ENCODE measurements at regions of chr5 and their contacts with region 1.

Region 1: DNA sequence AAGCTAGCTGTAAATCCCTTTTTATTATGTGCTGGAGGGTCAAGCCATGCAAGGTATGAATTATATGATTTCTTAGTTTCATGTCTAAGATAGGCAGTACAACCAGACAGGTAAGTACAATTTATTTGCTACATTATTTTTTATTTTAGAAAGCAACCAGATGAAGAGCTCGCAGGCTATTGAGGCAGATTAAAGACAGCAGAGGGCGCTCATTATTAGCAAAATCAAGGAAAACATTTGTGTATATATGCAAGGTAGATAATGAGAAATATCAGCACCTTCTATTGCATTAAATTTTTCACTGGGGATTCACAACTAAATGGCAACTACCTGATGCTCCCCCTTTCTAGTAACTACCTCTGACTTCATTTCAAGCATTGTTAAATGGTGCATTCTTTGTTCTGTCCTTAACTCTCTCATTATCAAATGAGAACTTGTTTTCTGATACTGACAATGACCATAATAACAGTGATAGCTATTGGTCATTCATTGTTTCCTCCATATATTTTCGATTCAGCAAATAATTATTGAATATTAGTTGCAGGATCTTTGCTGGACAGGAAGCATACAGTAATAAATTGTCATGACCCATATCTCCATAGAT is 8.6 kb downstream of the SCGB3A2 start:
- DNase-seq: peak; percentile 25
- H3K4me3 ChIP-seq: no peak overlapping the region
- H3K27ac ChIP-seq: no peak overlapping the region
- H3K4me1 ChIP-seq: peaks cover 15% of the 10 kb centered on the region
- H3K27me3 ChIP-seq: no peaks in the 10 kb centered on the region
- CTCF ChIP-seq: peak; percentile 65 to 77

Region 2: DNA sequence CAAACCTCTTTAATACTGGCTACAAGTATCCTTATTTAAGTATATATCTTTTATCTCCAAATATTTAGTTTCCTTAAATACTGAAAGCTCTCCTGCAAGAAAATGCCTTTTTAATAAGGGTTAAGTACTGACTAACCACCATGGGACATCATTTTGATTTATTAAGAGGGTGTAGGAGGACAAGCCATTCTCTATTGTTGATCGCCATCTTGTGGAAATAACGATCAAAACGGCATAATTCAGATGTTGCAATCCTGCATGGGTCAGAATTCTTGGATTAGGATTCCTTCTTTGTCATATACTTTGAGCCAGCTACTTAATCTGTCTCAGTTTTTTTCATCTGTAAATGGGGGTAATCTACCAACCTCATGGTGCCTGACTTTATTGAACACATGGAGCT is 47.9 kb after region 1 on chr5:
- CTCF ChIA-PET with region 1: no interaction called
- dilution Hi-C with region 1: loop called (anchors 5 kb)
- in situ Hi-C with region 1: loop called (anchors 5 kb)
- intact Hi-C with region 1: loop called (anchors 1 kb)
- DNase-seq: peak; percentile 69
- H3K4me3 ChIP-seq: no peak overlapping the region
- H3K27ac ChIP-seq: no peak overlapping the region
- H3K4me1 ChIP-seq: peaks cover 4% of the 10 kb centered on the region
- H3K27me3 ChIP-seq: no peaks in the 10 kb centered on the region
- CTCF ChIP-seq: peak; percentile 64

Region 3: GRCh38 chr5:148107608-148108007 is 220.5 kb after region 1 on chr5:
- CTCF ChIA-PET with region 1: no interaction called
- dilution Hi-C with region 1: no loop called
- in situ Hi-C with region 1: no loop called
- intact Hi-C with region 1: loop called (anchors 5 kb)
- DNase-seq: no peak
- H3K4me3 ChIP-seq: no peak overlapping the region
- H3K27ac ChIP-seq: no peak overlapping the region
- H3K4me1 ChIP-seq: no peaks in the 10 kb centered on the region
- H3K27me3 ChIP-seq: no peaks in the 10 kb centered on the region
- CTCF ChIP-seq: peak; percentile 31 to 56

Region 4: GRCh38 chr5:148120317-148120716 is 233.2 kb after region 1 on chr5:
- CTCF ChIA-PET with region 1: no interaction called
- dilution Hi-C with region 1: no loop called
- in situ Hi-C with region 1: no loop called
- intact Hi-C with region 1: loop called (anchors 5 kb)
- DNase-seq: no peak
- H3K4me3 ChIP-seq: no peak overlapping the region
- H3K27ac ChIP-seq: no peak overlapping the region
- H3K4me1 ChIP-seq: no peaks in the 10 kb centered on the region
- H3K27me3 ChIP-seq: no peaks in the 10 kb centered on the region
- CTCF ChIP-seq: no peak